Adrenal gland (tissue), 19 donors: ENCODE measurements at regions of chr13 and their contacts with region 1.

Region 1: DNA sequence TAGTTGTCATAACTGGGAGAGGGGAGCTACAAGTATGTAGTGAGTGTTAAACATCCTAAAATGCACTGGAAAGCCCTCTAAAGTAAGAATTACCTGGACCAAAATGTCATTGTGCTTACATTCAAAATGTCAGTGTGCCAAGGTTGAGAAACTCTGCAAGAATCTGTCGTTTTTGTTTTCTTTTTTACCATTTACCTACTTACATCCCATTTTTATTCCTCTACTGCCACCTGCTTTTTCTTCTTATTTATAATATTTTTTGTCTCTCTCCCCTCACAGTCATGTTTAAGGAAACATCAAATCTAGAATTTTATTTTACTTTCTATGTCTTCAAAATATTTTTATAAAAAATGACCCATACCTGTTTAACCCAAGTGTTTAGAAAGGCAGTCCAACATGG is 226.4 kb downstream of the PCDH17 start:
- DNase-seq: no peak
- H3K4me3 ChIP-seq: no peak overlapping the region
- H3K27ac ChIP-seq: no peak overlapping the region
- H3K4me1 ChIP-seq: no peaks in the 10 kb centered on the region
- H3K27me3 ChIP-seq: no peaks in the 10 kb centered on the region
- CTCF ChIP-seq: peak in 4 of 6 experiments; percentile 3 to 41 (median 30)
- POLR2A ChIP-seq: no peak

Region 2: DNA sequence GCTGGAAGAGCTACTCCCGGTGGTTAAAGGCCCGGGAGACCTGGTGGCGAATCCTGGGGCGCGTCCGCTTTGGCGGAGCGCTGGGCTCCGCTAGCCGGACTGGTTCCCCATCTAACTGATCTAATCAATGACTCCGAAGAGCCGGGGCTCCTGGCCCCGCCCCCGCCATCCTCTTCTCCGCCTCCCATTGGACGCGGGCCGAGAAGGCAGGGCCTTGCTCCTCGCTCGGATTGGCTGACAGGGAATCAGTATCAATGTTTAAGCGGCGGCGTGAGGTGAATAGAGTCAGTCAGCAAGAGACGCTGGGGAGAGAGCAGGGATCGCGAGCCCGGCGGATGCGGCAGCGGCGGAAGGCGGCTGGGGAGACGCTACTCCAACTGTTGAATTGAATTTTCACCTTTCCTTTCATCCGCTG is 228.1 kb before region 1 on chr13:
- intact Hi-C with region 1: loop called in 1 of 2 experiments (anchors 10 kb)
- DNase-seq: peak; percentile 73 to 97 (median 86)
- H3K4me3 ChIP-seq: peak overlapping the region in 1 of 4 donors; percentile 64
- H3K27ac ChIP-seq: no peak overlapping the region
- H3K4me1 ChIP-seq: peaks cover 14 to 24% of the 10 kb centered on the region in 2 donors
- H3K27me3 ChIP-seq: peaks cover 30% of the 10 kb centered on the region
- CTCF ChIP-seq: no peak
- POLR2A ChIP-seq: peak; percentile 82 to 95

Region 3: GRCh38 chr13:59247171-59247570 is 1389.2 kb after region 1 on chr13:
- intact Hi-C with region 1: no loop called
- DNase-seq: peak in 4 of 7 donors; percentile 7 to 22 (median 14)
- H3K4me3 ChIP-seq: no peak overlapping the region
- H3K27ac ChIP-seq: no peak overlapping the region
- H3K4me1 ChIP-seq: no peaks in the 10 kb centered on the region
- H3K27me3 ChIP-seq: no peaks in the 10 kb centered on the region
- CTCF ChIP-seq: no peak
- POLR2A ChIP-seq: no peak